ENCODE measurements at regions of chr3 and their contacts with region 1.

Region 1: GRCh38 chr3:72818092-72818773 is 30.0 kb downstream of the SHQ1 start:
- DNase-seq: peak; percentile 21
- ATAC-seq: no peak
- H3K4me3 ChIP-seq: no peak overlapping the region
- H3K4me3 Mint-ChIP-seq: no peak overlapping the region
- H3K27ac ChIP-seq: no peak overlapping the region
- H3K27ac Mint-ChIP-seq: no peak overlapping the region
- H3K4me1 ChIP-seq: peaks cover 25 to 29% of the 10 kb centered on the region in 2 donors
- H3K4me1 Mint-ChIP-seq: peaks cover 19% of the 10 kb centered on the region
- H3K27me3 ChIP-seq: no peaks in the 10 kb centered on the region
- H3K27me3 Mint-ChIP-seq: no peaks in the 10 kb centered on the region
- CTCF ChIP-seq: no peak

Region 2: DNA sequence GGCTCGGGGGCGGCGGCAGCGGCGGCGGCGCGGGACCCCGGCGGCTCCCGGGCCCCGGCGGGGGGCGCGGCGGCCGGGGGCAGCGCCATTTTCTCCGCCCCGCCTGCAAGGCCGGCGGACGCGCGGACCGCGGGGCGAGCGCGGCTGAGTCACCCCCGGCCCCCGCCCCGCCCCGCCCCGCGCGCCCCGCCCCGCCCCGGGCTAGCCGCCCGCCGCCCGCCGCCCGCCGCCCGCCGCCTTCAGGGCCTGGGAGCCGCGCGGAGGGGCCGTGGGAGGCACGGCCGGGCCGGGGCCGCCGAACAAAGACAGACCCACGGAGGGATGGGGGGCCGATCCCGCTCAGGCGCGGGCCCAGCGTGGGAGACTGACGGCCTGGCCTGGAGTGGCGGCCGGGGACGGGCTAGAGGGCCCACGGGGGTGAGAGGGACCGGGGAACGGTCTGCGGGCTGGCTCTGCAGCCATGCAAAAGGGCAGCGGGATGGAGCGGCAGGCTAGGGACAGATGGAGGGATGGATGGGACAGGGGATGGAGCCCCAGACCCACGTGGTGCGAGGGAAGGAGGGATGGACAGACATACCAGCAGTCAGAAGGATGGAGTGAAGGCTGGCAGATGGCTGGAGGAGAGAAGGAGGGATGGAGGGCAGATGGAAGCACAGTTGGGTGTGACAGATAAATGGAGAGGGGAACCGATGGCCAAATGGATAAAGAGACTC is 1092.8 kb before region 1 on chr3 and contains the start of gene EIF4E3:
- CTCF ChIA-PET with region 1: interaction called, 120 read pairs
- POLR2A ChIA-PET with region 1: no interaction called
- intact Hi-C with region 1: loop called (anchors 1 kb)
- DNase-seq: peak; percentile 51
- ATAC-seq: peak; percentile 73
- H3K4me3 ChIP-seq: peak within 1 kb of the TSS; percentile 59 to 71 (median 68)
- H3K4me3 Mint-ChIP-seq: peak within 1 kb of the TSS; percentile 82
- H3K27ac ChIP-seq: no peak within 1 kb of the TSS
- H3K27ac Mint-ChIP-seq: peak within 1 kb of the TSS; percentile 43
- H3K4me1 ChIP-seq: peaks cover 29% of the 10 kb centered on the region in 2 donors
- H3K4me1 Mint-ChIP-seq: peaks cover 43% of the 10 kb centered on the region
- H3K27me3 ChIP-seq: peaks cover 0 to 27% (median 0%) of the 10 kb centered on the region in 4 experiments
- H3K27me3 Mint-ChIP-seq: peaks cover 8% of the 10 kb centered on the region
- CTCF ChIP-seq: no peak
- total RNA-seq, gene EIF4E3: 4.2 and 5.0 TPM in 2 replicates

Region 3: DNA sequence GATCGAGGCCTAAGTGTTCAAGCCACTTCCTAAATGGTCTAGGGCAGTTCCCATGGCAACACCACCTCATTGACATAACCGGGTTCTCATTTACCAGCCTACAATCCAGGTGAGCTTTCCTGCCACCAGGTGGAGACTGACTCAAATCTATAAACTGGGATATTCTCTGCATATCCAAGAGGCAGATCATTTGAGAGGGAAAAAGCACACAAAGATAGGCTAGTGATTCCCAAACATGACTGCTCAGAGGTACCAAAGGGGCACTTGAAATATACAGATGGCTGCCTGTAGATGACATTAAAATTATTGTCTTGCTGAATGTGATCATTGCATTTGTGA is 892.0 kb before region 1 on chr3:
- CTCF ChIA-PET with region 1: interaction called, 25 read pairs
- POLR2A ChIA-PET with region 1: no interaction called
- intact Hi-C with region 1: loop called (anchors 1 kb)
- DNase-seq: peak; percentile 56
- ATAC-seq: peak; percentile 36
- H3K4me3 ChIP-seq: no peak overlapping the region
- H3K4me3 Mint-ChIP-seq: no peak overlapping the region
- H3K27ac ChIP-seq: no peak overlapping the region
- H3K27ac Mint-ChIP-seq: no peak overlapping the region
- H3K4me1 ChIP-seq: peaks cover 0 to 6% of the 10 kb centered on the region in 2 donors
- H3K4me1 Mint-ChIP-seq: peaks cover 6% of the 10 kb centered on the region
- H3K27me3 ChIP-seq: peaks cover 0 to 49% (median 33%) of the 10 kb centered on the region in 4 experiments
- H3K27me3 Mint-ChIP-seq: peaks cover 67% of the 10 kb centered on the region
- CTCF ChIP-seq: peak; percentile 41

Region 4: DNA sequence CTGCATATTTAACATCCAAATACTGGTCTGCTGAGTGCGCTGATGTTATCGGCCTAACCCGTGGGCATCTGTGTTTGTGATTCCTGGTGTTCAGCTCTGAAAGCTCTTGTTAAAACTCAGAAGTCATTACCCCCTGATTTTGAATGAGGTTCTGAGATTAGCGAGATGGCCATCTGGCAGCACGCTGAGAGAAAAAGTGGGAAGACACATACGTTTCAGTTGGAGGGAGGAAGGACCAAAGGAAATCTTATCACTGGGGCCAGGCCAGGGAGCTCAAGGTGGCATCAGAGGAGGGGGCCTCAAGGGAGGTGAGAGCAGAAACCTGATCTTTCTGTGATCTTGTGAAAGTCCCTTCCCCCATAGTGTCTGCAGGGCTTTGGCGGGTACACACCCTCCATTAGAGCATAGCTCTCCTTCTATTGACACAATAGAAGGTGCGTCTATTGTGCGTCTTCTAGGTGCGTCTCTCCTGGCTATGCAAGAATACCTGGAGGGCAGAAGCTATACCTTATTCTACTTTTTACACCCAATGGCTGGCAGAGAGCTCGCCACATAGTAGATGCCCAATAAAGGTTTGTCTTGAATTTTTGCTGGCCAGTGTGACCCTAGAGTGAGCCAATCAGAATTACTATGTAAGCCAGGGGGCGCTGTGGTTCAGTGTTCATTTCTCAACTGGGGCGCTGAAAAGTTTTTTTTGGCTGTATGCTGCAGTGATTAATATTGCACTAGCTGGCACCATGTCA is 152.4 kb before region 1 on chr3:
- CTCF ChIA-PET with region 1: interaction called, 161 read pairs
- POLR2A ChIA-PET with region 1: no interaction called
- intact Hi-C with region 1: loop called (anchors 1 kb)
- DNase-seq: peak; percentile 59
- ATAC-seq: peak; percentile 39
- H3K4me3 ChIP-seq: no peak overlapping the region
- H3K4me3 Mint-ChIP-seq: no peak overlapping the region
- H3K27ac ChIP-seq: no peak overlapping the region
- H3K27ac Mint-ChIP-seq: no peak overlapping the region
- H3K4me1 ChIP-seq: no peaks in the 10 kb centered on the region
- H3K4me1 Mint-ChIP-seq: no peaks in the 10 kb centered on the region
- H3K27me3 ChIP-seq: peaks cover 0 to 13% (median 0%) of the 10 kb centered on the region in 4 experiments
- H3K27me3 Mint-ChIP-seq: peaks cover 16% of the 10 kb centered on the region
- CTCF ChIP-seq: peak; percentile 70